CD8-positive, alpha-beta memory T cell (primary cell): ENCODE measurements at regions of chr18 and their contacts with region 1.

Region 1: GRCh38 chr18:11995445-11996189 is 14.3 kb downstream of the IMPA2 start:
- DNase-seq: peak; percentile 30 to 71 (median 41)
- H3K4me3 ChIP-seq: no peak overlapping the region
- H3K4me3 Mint-ChIP-seq: peak overlapping the region in 5 of 7 donors; percentile 9 to 61 (median 37)
- H3K27ac ChIP-seq: no peak overlapping the region
- H3K27ac Mint-ChIP-seq: peak overlapping the region in 5 of 8 donors; percentile 31 to 86 (median 72)
- H3K4me1 ChIP-seq: peaks cover 4% of the 10 kb centered on the region
- H3K4me1 Mint-ChIP-seq: peaks cover 8 to 12% (median 10%) of the 10 kb centered on the region in 3 donors
- H3K27me3 ChIP-seq: no peaks in the 10 kb centered on the region
- H3K27me3 Mint-ChIP-seq: peaks cover 0 to 2% of the 10 kb centered on the region in 2 donors

Region 2: GRCh38 chr18:11925800-11926481 is 69.7 kb before region 1 on chr18:
- CTCF ChIA-PET with region 1: interaction called, 13 read pairs
- POLR2A ChIA-PET with region 1: no interaction called
- DNase-seq: no peak
- H3K4me3 ChIP-seq: no peak overlapping the region
- H3K4me3 Mint-ChIP-seq: no peak overlapping the region
- H3K27ac ChIP-seq: no peak overlapping the region
- H3K27ac Mint-ChIP-seq: no peak overlapping the region
- H3K4me1 ChIP-seq: no peaks in the 10 kb centered on the region
- H3K4me1 Mint-ChIP-seq: peaks cover 0 to 7% (median 0%) of the 10 kb centered on the region in 3 donors
- H3K27me3 ChIP-seq: no peaks in the 10 kb centered on the region
- H3K27me3 Mint-ChIP-seq: peaks cover 3 to 8% of the 10 kb centered on the region in 2 donors

Region 3: GRCh38 chr18:11937874-11938478 is 57.6 kb before region 1 on chr18:
- CTCF ChIA-PET with region 1: interaction called, 245 read pairs
- POLR2A ChIA-PET with region 1: interaction called, 3 read pairs
- DNase-seq: peak; percentile 54 to 80 (median 63)
- H3K4me3 ChIP-seq: no peak overlapping the region
- H3K4me3 Mint-ChIP-seq: no peak overlapping the region
- H3K27ac ChIP-seq: no peak overlapping the region
- H3K27ac Mint-ChIP-seq: peak overlapping the region in 1 of 8 donors; percentile 47
- H3K4me1 ChIP-seq: no peaks in the 10 kb centered on the region
- H3K4me1 Mint-ChIP-seq: peaks cover 0 to 3% (median 0%) of the 10 kb centered on the region in 3 donors
- H3K27me3 ChIP-seq: no peaks in the 10 kb centered on the region
- H3K27me3 Mint-ChIP-seq: peaks cover 0 to 2% of the 10 kb centered on the region in 2 donors

Region 4: GRCh38 chr18:11947214-11948191 is 48.1 kb before region 1 on chr18:
- CTCF ChIA-PET with region 1: interaction called, 30 read pairs
- POLR2A ChIA-PET with region 1: no interaction called
- DNase-seq: peak; percentile 13 to 74 (median 47)
- H3K4me3 ChIP-seq: peak overlapping the region; percentile 56
- H3K4me3 Mint-ChIP-seq: peak overlapping the region; percentile 78 to 96 (median 84)
- H3K27ac ChIP-seq: peak overlapping the region; percentile 51
- H3K27ac Mint-ChIP-seq: peak overlapping the region in 6 of 8 donors; percentile 51 to 91 (median 79)
- H3K4me1 ChIP-seq: peaks cover 9% of the 10 kb centered on the region
- H3K4me1 Mint-ChIP-seq: peaks cover 9 to 16% (median 12%) of the 10 kb centered on the region in 3 donors
- H3K27me3 ChIP-seq: no peaks in the 10 kb centered on the region
- H3K27me3 Mint-ChIP-seq: peaks cover 0 to 2% of the 10 kb centered on the region in 2 donors

Region 5: DNA sequence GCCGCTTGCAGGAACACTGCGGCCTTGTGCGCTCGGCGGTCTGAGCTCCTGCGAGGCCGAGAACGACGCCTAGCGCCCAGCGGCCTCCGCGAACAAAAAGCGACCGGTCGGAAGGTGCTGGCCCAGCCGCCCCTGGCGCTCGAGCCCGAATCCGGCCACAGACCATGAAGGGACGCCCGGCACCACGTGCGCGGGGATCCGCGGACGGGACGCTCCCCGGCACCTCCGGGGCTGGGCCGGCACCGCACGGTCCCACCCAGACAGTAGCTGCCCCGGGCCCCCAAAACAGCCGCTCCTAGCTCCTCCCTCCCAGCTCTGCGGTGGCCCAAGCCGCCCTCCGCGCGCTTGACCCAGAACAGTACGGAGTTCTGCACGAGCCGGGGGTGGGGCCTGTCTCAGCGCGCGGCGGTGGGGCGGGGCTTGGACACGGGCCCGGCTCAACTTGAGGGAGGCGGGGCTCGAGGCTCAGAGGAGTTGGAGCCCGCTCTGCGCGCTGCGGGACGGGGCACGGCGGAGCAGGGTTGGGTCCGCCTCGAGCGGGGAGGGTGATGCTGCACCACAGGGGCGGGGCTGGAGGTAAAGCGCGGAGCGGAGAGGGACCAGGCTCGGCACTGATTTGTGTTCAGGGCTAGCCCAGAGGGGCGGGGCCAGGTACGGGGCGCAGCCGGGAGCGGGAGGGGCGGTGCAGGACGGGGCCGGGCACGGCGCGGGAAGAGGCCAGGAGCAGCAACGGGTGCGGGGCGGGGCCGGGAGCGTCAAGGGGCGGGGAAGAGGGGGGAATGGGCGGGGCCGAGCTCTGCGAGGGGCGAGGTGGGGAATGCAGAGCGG is 14.8 kb before region 1 on chr18:
- CTCF ChIA-PET with region 1: interaction called, 30 read pairs
- POLR2A ChIA-PET with region 1: no interaction called
- DNase-seq: peak; percentile 91 to 95 (median 93)
- H3K4me3 ChIP-seq: peak overlapping the region; percentile 64
- H3K4me3 Mint-ChIP-seq: peak overlapping the region; percentile 84 to 93 (median 86)
- H3K27ac ChIP-seq: peak overlapping the region; percentile 30
- H3K27ac Mint-ChIP-seq: peak overlapping the region in 7 of 8 donors; percentile 13 to 84 (median 67)
- H3K4me1 ChIP-seq: peaks cover 12% of the 10 kb centered on the region
- H3K4me1 Mint-ChIP-seq: peaks cover 11 to 16% (median 14%) of the 10 kb centered on the region in 3 donors
- H3K27me3 ChIP-seq: no peaks in the 10 kb centered on the region
- H3K27me3 Mint-ChIP-seq: no peaks in the 10 kb centered on the region

Region 6: DNA sequence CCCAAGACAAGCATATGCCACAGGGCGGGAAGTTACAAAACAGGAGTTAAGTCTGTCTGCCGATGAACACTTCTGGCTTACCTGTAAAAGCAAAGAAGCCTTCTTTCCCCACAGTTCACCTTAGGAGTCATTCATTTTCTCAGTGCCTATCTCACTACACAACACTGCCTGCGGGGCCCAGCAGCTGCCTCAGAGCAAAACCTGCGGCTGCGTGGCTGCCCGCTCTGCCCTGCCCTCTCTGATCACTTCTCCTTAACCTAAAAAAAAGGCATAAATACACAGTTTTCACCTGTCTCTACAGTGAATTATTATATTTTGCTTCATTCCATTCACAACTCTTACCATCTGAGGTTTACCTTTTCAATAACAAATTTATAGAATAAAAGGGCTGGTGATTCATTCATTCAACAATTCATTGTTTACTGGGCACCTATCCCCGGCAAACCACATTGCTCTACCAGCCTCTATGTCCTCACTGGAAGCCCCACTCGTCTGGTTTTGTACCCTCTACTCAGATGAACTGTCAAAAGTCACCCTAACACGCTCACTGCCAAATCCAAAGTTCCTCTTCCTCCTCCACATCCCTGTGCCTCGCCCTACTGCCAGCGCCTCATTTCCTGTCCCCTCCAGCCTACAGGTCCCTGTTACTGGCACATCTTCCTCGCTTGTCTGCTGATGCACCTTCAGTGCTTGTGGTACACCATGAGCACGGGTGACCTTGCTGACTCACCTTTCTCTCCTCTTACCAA is 350.0 kb after region 1 on chr18:
- CTCF ChIA-PET with region 1: no interaction called
- POLR2A ChIA-PET with region 1: no interaction called
- DNase-seq: no peak
- H3K4me3 ChIP-seq: no peak overlapping the region
- H3K4me3 Mint-ChIP-seq: no peak overlapping the region
- H3K27ac ChIP-seq: no peak overlapping the region
- H3K27ac Mint-ChIP-seq: peak overlapping the region in 1 of 8 donors; percentile 70
- H3K4me1 ChIP-seq: no peaks in the 10 kb centered on the region
- H3K4me1 Mint-ChIP-seq: no peaks in the 10 kb centered on the region
- H3K27me3 ChIP-seq: no peaks in the 10 kb centered on the region
- H3K27me3 Mint-ChIP-seq: no peaks in the 10 kb centered on the region